ENCODE measurements at regions of chr12 and their contacts with region 1.

Region 1: DNA sequence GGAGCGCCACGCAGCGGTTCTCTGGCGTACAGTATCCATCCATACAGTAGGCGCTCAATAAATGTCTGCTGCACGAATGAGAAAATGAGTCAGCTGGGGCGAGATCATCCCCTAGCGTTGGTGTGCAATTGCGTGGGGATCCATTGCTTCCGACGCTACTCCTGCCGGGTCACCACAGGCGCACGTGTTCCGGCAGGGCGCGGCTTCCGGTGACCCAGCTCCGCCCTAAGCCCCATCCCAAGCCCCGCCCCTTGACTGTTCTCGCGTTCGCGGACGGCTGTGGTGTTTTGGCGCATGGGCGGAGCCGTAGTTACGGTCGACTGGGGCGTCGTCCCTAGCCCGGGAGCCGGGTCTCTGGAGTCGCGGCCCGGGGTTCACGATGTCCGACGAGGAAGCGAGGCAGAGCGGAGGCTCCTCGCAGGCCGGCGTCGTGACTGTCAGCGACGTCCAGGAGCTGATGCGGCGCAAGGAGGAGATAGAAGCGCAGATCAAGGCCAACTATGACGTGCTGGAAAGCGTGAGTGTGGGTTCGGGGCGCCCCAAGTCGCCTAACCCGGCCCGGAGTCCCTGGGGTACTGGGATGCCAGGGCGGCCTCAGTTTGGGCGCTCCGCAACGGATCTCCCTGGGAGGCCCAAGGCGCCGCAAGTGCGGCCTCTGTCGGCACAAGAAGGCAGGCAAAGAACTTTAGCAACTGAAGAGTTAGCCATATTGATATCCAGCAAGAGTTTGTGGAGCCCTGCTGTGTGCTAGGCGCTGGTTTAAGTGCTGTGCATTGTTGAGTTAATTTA is at the start of gene PSMD9:
- DNase-seq: peak; percentile 97 to 99 (median 99)
- H3K4me3 ChIP-seq: peak within 1 kb of the TSS; percentile 52 to 87 (median 84)
- H3K4me3 Mint-ChIP-seq: peak within 1 kb of the TSS; percentile 94 to 99
- H3K27ac ChIP-seq: peak within 1 kb of the TSS; percentile 92
- H3K27ac Mint-ChIP-seq: peak within 1 kb of the TSS; percentile 97 to 99 (median 99)
- H3K4me1 ChIP-seq: peaks cover 19 to 21% of the 10 kb centered on the region in 2 donors
- H3K4me1 Mint-ChIP-seq: peaks cover 23% of the 10 kb centered on the region
- H3K27me3 ChIP-seq: no peaks in the 10 kb centered on the region
- H3K27me3 Mint-ChIP-seq: peaks cover 0 to 3% (median 1%) of the 10 kb centered on the region in 3 donors
- CTCF ChIP-seq: peak; percentile 53
- polyA plus RNA-seq, gene PSMD9: 89.6 to 135 (median 93.3) TPM

Region 2: DNA sequence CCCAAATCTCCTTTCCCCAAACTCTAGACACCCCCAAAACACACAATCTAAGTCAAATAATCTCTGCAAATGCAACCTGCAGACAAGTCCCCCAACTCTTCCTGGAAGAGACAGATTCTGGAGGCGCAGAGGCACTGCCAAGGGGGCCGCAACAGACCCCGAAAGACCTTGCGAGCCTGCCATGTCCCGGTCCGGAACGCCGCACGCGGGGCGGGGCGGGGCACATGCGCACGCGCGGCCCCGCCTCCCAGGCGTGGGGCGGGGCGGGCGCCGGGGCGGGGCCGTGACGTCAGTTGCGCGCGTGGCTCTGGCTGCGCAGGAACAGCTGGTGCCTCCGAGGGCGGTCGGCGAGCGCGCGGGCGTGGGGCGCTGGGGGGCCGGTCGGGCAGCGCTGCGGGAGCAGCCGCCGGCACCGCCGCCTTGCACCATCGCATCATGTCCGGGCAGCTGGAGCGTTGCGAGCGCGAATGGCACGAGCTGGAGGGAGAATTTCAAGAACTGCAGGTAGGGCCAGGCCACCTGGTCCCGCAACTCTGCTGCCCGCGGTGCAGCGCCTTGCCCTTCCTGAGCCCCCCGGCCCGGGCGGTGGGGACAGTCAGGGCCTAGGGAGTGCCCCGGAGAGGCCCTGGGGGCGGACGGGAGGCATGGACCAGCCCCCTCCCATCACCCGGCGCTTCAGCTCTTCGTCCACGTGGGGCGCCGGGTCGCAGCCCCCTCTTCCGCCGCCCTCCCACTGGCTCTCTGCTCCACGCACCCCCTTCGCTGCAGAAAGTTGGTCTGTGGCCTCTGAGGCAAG is 176.0 kb before region 1 on chr12 and contains the start of gene TMEM120B:
- intact Hi-C with region 1: loop called in 1 of 2 experiments (anchors 10 kb)
- DNase-seq: peak; percentile 62 to 82 (median 72)
- H3K4me3 ChIP-seq: peak within 1 kb of the TSS; percentile 54 to 97 (median 94)
- H3K4me3 Mint-ChIP-seq: peak within 1 kb of the TSS; percentile 91 to 95
- H3K27ac ChIP-seq: peak within 1 kb of the TSS; percentile 61 to 86
- H3K27ac Mint-ChIP-seq: peak within 1 kb of the TSS; percentile 92 to 98 (median 95)
- H3K4me1 ChIP-seq: peaks cover 18 to 28% of the 10 kb centered on the region in 2 donors
- H3K4me1 Mint-ChIP-seq: peaks cover 32% of the 10 kb centered on the region
- H3K27me3 ChIP-seq: no peaks in the 10 kb centered on the region
- H3K27me3 Mint-ChIP-seq: peaks cover 2 to 10% (median 4%) of the 10 kb centered on the region in 3 donors
- CTCF ChIP-seq: no peak
- polyA plus RNA-seq, gene TMEM120B: 0.65 to 2.4 (median 1.1) TPM

Region 3: DNA sequence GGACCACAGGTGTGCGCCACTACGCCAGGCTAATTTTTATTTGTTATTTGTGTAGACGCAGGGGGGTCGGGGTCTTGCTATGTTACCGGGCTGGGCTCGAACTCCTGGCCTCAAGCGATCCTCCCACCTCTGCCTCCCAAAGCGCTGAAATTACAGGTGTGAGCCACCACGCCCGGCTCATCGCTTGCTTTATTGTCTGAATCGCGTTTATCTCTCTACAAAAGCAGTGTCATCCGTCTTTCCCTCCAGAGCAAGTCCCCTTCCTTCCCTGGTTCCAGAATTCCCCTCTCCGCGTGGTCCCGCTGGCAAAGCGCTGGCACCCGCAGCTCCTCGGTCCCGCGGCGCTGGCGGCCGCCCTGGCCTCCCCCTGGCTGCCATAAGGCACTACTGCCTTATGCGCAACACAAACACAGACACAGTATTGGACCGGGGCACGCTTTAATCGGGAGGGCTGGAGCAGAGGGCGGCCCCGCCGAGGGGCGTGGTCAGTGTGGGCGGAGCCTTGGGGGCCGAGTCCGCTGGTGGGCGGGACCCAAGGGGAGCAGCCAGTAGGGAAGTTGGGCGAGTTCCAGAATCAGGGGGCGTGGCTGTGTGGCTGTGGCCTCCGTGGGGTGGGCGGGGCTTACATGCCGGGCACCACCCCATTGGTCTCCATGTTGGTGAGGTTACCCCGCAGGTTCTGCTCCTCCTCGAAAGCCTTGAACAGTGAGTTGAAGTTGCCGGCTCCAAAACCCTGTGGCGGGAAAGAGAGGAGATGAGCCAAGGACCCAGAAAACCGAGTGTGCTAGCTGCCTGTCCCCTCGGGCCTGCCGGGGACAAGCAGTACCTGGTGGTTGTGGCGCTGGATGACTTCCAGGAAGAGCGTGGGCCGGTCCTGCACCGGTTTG is 49.3 kb before region 1 on chr12:
- intact Hi-C with region 1: loop called (anchors 2 to 5 kb)
- DNase-seq: peak; percentile 98
- H3K4me3 ChIP-seq: peak overlapping the region; percentile 70 to 99 (median 98)
- H3K4me3 Mint-ChIP-seq: peak overlapping the region; percentile 95 to 99
- H3K27ac ChIP-seq: peak overlapping the region; percentile 75 to 89
- H3K27ac Mint-ChIP-seq: peak overlapping the region; percentile 87 to 96 (median 92)
- H3K4me1 ChIP-seq: peaks cover 23 to 27% of the 10 kb centered on the region in 2 donors
- H3K4me1 Mint-ChIP-seq: peaks cover 26% of the 10 kb centered on the region
- H3K27me3 ChIP-seq: no peaks in the 10 kb centered on the region
- H3K27me3 Mint-ChIP-seq: peaks cover 0 to 13% (median 6%) of the 10 kb centered on the region in 3 donors
- CTCF ChIP-seq: peak; percentile 34

Region 4: GRCh38 chr12:121858662-121859572 is 29.8 kb before region 1 on chr12 and contains the start of gene HPD:
- intact Hi-C with region 1: no loop called
- DNase-seq: no peak
- H3K4me3 ChIP-seq: no peak within 1 kb of the TSS
- H3K4me3 Mint-ChIP-seq: no peak within 1 kb of the TSS
- H3K27ac ChIP-seq: no peak within 1 kb of the TSS
- H3K27ac Mint-ChIP-seq: peak within 1 kb of the TSS in 1 of 7 donors; percentile 14
- H3K4me1 ChIP-seq: peaks cover 30 to 34% of the 10 kb centered on the region in 2 donors
- H3K4me1 Mint-ChIP-seq: peaks cover 24% of the 10 kb centered on the region
- H3K27me3 ChIP-seq: no peaks in the 10 kb centered on the region
- H3K27me3 Mint-ChIP-seq: peaks cover 4 to 6% (median 5%) of the 10 kb centered on the region in 3 donors
- CTCF ChIP-seq: no peak
- polyA plus RNA-seq, gene HPD: 0.19 to 0.75 TPM in 2 of 3 donors, not detected in the other